Left ventricle myocardium superior (tissue), 1 donor: ENCODE measurements at regions of chr15 and their contacts with region 1.

Region 1: GRCh38 chr15:41048397-41048796 is 67.7 kb downstream of the INO80 start:
- DNase-seq: no peak
- ATAC-seq: no peak

Region 2: DNA sequence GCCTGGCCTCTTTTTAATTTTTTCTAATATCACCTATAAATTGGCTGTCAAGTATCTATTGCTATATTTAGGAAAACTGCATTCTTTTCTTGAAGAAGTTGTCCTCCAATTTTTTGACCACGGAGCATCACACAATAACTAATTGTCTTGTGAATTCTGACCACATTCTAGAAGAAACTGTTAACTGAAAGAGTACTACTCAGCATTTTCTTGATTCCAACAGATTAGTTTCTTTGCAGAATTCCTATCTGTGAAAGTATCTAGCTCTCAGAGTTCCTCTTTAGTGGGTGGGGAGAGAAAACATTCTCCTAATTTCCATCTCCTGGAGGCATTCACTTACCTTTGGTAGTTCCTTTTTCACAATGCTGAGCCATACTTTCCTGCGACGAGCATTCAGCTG is 36.6 kb after region 1 on chr15:
- intact Hi-C with region 1: loop called (anchors 5 kb)
- DNase-seq: no peak
- ATAC-seq: no peak